Mammary epithelial cell (primary cell): ENCODE measurements at regions of chr14 and their contacts with region 1.

Region 1: DNA sequence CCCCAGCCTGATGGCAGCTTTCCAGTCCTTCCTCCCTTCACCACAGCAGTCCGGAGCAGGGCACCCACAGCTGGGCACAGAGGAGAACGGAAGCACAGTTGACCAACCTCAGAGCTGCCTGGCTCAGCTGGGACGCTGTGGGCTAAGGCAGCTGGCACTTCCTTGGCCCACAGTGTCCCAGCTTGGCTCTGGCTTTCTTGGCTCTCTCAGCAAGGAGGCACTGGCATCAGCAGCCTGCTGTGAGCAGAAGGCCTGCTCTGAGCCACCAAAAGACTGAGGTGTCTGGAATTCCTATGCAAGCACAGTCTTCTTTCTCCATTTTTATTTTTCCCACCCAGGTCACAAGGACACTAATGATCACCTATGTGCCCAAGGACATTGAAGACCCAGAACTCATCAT is 32.6 kb downstream of the NGB start:
- DNase-seq: no peak
- H3K4me3 ChIP-seq: no peak overlapping the region
- H3K27ac ChIP-seq: no peak overlapping the region
- H3K4me1 ChIP-seq: no peaks in the 10 kb centered on the region
- H3K27me3 ChIP-seq: peaks cover 2% of the 10 kb centered on the region
- CTCF ChIP-seq: no peak

Region 2: GRCh38 chr14:77098529-77099353 is 139.6 kb before region 1 on chr14:
- CTCF ChIA-PET with region 1: no interaction called
- dilution Hi-C with region 1: no loop called
- in situ Hi-C with region 1: no loop called
- intact Hi-C with region 1: no loop called
- DNase-seq: no peak
- H3K4me3 ChIP-seq: peak overlapping the region; percentile 84 to 96 (median 91)
- H3K27ac ChIP-seq: peak overlapping the region; percentile 89
- H3K4me1 ChIP-seq: peaks cover 18% of the 10 kb centered on the region
- H3K27me3 ChIP-seq: no peaks in the 10 kb centered on the region
- CTCF ChIP-seq: no peak

Region 3: DNA sequence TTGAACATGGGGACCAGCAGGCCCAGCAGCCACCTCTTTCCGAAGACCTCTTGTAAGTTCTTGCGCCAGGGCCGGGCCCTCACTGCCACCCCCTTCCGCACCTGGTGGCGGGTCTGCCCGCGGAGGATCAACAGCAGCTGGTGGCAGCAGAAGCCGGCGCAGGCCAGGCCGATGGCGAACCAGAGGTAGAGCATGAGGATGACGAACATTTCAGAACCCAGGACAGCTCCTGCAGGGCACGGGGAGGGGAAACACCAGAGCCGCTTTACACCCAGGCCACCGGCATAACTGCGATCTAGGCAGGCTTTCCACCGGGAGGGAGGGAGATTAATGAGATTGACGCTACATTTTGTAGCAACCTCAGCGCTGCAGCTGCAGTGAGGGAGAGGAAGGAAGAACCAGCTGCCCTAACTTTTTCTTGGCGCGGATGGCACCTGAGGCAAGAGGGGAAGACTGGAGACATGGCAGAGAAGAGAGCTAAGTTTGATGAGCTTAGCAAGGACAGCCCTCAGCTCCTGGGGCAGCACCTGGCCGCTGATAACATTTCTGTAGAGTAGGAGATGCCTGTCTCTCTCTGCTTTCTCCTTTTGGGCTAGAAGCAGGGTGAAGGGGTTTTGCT is 104.5 kb before region 1 on chr14:
- CTCF ChIA-PET with region 1: no interaction called
- dilution Hi-C with region 1: loop called (anchors 5 kb)
- in situ Hi-C with region 1: no loop called
- intact Hi-C with region 1: no loop called
- DNase-seq: peak; percentile 60
- H3K4me3 ChIP-seq: no peak overlapping the region
- H3K27ac ChIP-seq: no peak overlapping the region
- H3K4me1 ChIP-seq: no peaks in the 10 kb centered on the region
- H3K27me3 ChIP-seq: peaks cover 3% of the 10 kb centered on the region
- CTCF ChIP-seq: no peak